PC-3 (cell line): ENCODE measurements at regions of chr3 and their contacts with region 1.

Region 1: DNA sequence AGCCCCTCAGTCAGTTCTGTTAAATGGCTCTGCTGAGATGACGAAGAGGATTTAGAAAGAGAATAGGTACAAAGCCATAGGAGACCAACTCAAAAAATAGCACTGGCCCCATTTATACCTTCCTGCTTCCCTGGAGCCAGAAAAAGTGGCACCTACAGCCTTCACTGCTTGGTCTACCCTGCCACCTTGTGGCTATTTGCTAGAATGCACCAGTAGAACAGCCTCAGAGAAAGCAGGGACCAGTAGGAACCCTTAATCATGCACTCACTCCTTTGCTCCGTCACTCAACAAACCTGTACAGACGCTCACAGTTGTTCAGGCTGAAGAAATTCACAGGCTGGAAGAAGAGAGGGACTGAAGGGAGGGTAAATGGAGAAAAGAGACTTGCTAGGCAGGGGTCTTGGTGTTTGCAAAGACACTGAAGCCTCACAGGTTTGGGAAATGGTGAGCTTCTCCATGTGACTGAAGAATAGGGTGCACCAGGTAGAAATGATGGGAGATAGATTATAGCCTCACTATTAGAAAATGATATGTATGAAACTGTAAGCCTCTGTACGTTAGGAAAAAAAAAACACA is 12.1 kb upstream of the RTP2 start:
- DNase-seq: peak; percentile 92
- ATAC-seq: peak; percentile 87
- H3K4me3 ChIP-seq: no peak overlapping the region
- H3K27ac ChIP-seq: no peak overlapping the region
- H3K4me1 ChIP-seq: peaks cover 7% of the 10 kb centered on the region; the same call in 1 of the 2 replicates
- H3K27me3 ChIP-seq: no peaks in the 10 kb centered on the region
- CTCF ChIP-seq: peak; percentile 97

Region 2: GRCh38 chr3:187112934-187113793 is 601.3 kb before region 1 on chr3:
- CTCF ChIA-PET with region 1: no interaction called
- POLR2A ChIA-PET with region 1: no interaction called
- intact Hi-C with region 1: loop called (anchors 2 kb)
- DNase-seq: peak; percentile 66
- ATAC-seq: 0 out of 2 replicates have a peak, but pooled peaks have one; percentile 20
- H3K4me3 ChIP-seq: no peak overlapping the region
- H3K27ac ChIP-seq: no peak overlapping the region
- H3K4me1 ChIP-seq: no peaks in the 10 kb centered on the region
- H3K27me3 ChIP-seq: no peaks in the 10 kb centered on the region
- CTCF ChIP-seq: peak; percentile 86

Region 3: DNA sequence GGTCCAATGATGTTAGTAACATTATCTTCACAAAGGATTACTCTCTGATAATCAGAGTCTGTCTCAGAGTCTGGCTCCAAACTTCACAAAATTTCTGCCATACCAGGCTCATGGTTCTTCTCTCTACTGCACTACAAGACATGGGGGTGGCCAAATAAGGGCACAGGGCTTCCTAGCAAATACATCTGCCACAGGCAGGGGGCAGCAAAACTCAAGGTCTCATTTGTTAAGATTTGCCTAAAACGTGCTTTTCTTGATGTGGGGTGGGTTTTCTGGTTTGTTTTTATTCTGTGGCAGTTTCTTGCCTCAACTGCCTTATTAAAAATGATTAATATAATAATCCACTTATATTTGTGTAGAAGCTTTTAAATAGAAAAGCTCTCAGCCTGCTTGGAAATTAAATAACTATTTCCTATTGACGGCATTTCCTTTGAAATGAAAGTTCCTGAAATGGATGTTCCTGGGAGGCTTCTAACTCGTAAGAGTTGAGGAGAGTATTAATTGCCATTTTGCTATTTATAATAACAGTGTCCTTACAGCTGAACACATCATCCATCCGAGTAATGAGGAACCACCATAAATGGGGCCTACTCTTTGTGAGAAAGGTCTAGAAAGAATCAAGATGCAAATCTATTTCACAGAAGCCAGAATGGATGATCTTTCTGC is 98.1 kb before region 1 on chr3:
- CTCF ChIA-PET with region 1: no interaction called
- POLR2A ChIA-PET with region 1: no interaction called
- intact Hi-C with region 1: loop called (anchors 1 kb)
- DNase-seq: peak; percentile 66
- ATAC-seq: peak; percentile 74
- H3K4me3 ChIP-seq: no peak overlapping the region
- H3K27ac ChIP-seq: no peak overlapping the region
- H3K4me1 ChIP-seq: no peaks in the 10 kb centered on the region
- H3K27me3 ChIP-seq: peaks cover 75% of the 10 kb centered on the region
- CTCF ChIP-seq: peak; percentile 87

Region 4: GRCh38 chr3:187679638-187680396 is 34.7 kb before region 1 on chr3:
- CTCF ChIA-PET with region 1: interaction called, 6 read pairs
- POLR2A ChIA-PET with region 1: no interaction called
- intact Hi-C with region 1: loop called (anchors 1 kb)
- DNase-seq: peak; percentile 87
- ATAC-seq: peak; percentile 87
- H3K4me3 ChIP-seq: no peak overlapping the region
- H3K27ac ChIP-seq: no peak overlapping the region
- H3K4me1 ChIP-seq: no peaks in the 10 kb centered on the region
- H3K27me3 ChIP-seq: peaks cover 41% of the 10 kb centered on the region
- CTCF ChIP-seq: peak; percentile 92

Region 5: GRCh38 chr3:187694801-187695200 is 19.7 kb before region 1 on chr3:
- CTCF ChIA-PET with region 1: no interaction called
- POLR2A ChIA-PET with region 1: no interaction called
- intact Hi-C with region 1: no loop called
- DNase-seq: no peak
- ATAC-seq: no peak
- H3K4me3 ChIP-seq: no peak overlapping the region
- H3K27ac ChIP-seq: no peak overlapping the region
- H3K4me1 ChIP-seq: no peaks in the 10 kb centered on the region
- H3K27me3 ChIP-seq: peaks cover 65% of the 10 kb centered on the region
- CTCF ChIP-seq: no peak